Left lung (tissue), 14 donors: ENCODE measurements at regions of chr6 and their contacts with region 1.

Region 1: DNA sequence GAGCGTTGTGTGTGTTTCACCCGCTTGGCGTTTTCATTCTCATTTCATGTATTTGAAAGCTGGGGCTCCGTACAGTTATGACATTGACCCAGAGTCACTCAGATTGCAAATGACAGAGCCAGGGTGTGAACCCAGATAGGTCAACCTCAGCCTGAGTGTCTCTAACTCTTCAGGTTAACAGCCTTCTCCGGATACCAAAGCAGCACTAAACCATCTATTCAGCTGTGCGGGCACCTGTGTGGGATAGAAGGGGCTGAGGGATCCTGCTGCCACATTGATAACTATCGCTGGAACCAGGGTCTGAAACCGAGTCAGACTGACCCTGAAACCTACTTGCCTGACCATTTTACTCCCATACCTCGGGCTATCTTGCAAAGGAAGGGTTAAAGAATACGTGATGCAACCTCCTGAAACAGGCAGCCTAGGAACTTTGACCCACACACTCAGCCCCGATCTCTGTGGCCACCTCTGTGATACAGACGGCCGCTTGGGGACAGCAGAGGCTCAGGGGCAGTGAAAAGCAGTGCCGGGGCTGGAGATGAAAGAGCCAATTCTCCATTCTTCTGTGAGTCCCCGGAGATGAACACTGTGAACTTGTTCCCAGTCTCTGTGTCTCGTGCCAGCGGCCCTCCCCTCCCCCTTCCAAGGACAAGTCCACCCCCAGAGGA is 233.5 kb upstream of the QKI start:
- DNase-seq: peak in 3 of 4 donors; percentile 10 to 69 (median 45)
- ATAC-seq: peak; percentile 99
- H3K4me3 ChIP-seq: no peak overlapping the region
- H3K27ac ChIP-seq: no peak overlapping the region
- H3K4me1 ChIP-seq: peaks cover 0 to 4% of the 10 kb centered on the region in 2 donors
- H3K27me3 ChIP-seq: no peaks in the 10 kb centered on the region
- CTCF ChIP-seq: peak; percentile 55 to 62

Region 2: GRCh38 chr6:163001330-163001729 is 179.7 kb before region 1 on chr6:
- intact Hi-C with region 1: no loop called
- DNase-seq: no peak
- ATAC-seq: no peak
- H3K4me3 ChIP-seq: no peak overlapping the region
- H3K27ac ChIP-seq: no peak overlapping the region
- H3K4me1 ChIP-seq: no peaks in the 10 kb centered on the region
- H3K27me3 ChIP-seq: no peaks in the 10 kb centered on the region
- CTCF ChIP-seq: no peak

Region 3: DNA sequence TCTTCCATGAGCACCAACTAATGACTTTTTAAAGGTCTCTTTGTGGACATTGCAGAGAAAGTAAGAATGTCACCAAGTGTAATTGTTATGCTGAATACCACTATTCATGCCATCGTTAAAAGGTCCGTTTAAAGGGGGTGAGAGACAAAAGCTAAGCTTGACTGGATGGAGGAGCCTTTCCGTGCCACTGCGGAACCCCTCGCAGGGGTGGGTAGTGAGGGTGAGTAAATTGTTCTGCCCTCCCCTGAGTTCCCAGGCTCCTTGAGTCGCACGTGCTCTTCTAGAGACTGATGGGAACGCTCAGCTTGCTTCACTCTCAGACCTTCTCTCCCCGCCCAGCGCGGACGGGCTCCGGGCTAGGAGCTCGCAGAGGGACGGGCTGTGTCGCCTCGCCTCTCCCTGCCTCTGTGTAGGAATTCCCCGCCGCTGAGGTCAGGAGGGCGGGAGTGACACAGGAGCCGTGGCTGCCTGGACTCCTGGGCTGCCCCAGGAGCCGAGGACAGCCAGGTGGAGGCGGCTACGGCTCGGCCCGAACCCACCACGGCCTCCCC is 81.3 kb before region 1 on chr6:
- intact Hi-C with region 1: no loop called
- DNase-seq: no peak
- ATAC-seq: no peak
- H3K4me3 ChIP-seq: no peak overlapping the region
- H3K27ac ChIP-seq: no peak overlapping the region
- H3K4me1 ChIP-seq: no peaks in the 10 kb centered on the region
- H3K27me3 ChIP-seq: no peaks in the 10 kb centered on the region
- CTCF ChIP-seq: no peak

Region 4: DNA sequence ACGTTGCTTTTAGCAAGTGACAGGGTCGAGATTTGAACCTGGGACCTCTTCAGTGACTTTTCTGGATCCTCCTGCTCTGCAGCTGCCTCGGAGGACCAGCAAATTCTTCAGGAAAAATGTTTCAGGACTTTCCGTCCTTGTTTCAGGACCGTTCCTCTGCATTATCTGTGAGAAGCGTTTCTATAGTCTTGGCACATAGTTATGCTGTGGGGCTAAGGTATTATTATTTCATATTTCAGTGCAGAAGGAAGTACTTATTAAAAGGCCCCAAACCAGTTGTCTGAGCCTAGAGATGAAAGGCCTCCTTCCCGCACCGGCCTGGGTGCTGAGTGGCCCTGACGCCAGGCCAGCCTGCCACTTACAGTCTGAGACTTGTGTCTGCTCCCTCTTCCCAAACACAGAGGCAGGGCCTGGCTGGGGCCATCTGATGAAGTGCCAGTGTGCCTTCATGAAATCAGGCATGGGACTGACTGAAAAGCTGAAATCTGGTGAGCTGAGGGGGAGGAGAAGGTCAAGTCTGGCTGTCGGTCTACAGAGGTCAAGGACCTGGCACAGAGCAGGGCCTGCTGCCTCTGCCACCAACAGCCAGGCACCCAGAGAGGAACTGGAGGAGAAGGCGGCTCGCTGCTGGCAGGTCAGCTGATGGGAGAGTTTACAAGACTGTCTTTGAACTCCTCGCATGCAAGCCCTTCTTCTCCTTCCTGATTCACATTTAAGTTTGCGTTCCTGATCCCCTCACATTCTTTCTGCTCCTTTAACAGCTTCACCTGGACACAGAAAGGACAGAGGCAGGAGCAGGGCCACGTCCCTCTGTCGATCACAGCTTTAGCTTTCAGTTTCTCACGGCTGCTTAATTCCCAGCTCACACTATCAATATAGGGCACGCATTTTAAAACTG is 224.7 kb after region 1 on chr6:
- intact Hi-C with region 1: loop called in 1 of 2 experiments (anchors 10 kb)
- DNase-seq: peak in 3 of 4 donors; percentile 50 to 93 (median 91)
- ATAC-seq: peak; percentile 90
- H3K4me3 ChIP-seq: peak overlapping the region in 1 of 2 donors; percentile 30
- H3K27ac ChIP-seq: peak overlapping the region; percentile 91 to 95
- H3K4me1 ChIP-seq: peaks cover 19 to 43% of the 10 kb centered on the region in 2 donors
- H3K27me3 ChIP-seq: no peaks in the 10 kb centered on the region
- CTCF ChIP-seq: no peak

Region 5: DNA sequence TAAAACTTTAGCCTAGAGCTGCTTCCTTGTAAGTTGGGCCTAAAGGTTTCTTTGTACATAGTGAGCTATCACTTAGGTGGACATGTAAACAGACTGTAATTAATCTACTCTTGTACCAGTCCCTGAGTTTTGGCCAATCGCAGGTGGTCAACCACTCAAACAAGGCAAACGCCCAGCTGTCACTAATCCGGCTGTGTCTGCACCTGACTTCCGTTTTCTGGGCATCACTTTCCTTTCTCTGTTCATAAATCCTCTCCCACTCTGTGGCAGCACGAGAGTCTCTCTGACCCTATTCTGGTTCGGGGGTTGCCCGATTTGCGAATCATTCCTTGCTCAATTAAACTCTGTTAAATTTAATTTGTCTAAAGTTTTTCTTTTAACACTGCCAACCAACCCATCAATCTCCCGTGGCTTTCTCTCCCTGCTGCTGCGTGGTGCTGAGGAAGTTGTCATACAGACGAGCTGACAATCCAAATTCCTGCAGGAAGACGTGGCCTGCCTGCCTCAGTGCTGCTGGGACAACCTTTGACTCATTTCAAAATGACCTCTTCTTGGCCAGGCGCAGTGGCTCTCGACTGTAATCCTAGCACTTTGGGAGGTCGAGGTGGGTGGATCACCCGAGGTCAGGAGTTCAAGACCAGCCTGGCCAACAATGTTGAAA is 439.8 kb after region 1 on chr6:
- intact Hi-C with region 1: no loop called
- DNase-seq: no peak
- ATAC-seq: no peak
- H3K4me3 ChIP-seq: no peak overlapping the region
- H3K27ac ChIP-seq: no peak overlapping the region
- H3K4me1 ChIP-seq: no peaks in the 10 kb centered on the region
- H3K27me3 ChIP-seq: no peaks in the 10 kb centered on the region
- CTCF ChIP-seq: no peak